Activated naive CD4-positive, alpha-beta T cell treated with anti-CD3 and anti-CD28 coated beads for 36 hours (primary cell): ENCODE measurements at regions of chr10 and their contacts with region 1.

Region 1: GRCh38 chr10:11236234-11236633 is 218.6 kb downstream of the CELF2 start:
- DNase-seq: peak; percentile 61
- H3K4me3 Mint-ChIP-seq: peak overlapping the region; percentile 26
- H3K27ac Mint-ChIP-seq: peak overlapping the region; percentile 93
- H3K4me1 Mint-ChIP-seq: peaks cover 92% of the 10 kb centered on the region
- H3K27me3 Mint-ChIP-seq: no peaks in the 10 kb centered on the region

Region 2: GRCh38 chr10:11097686-11098085 is 138.5 kb before region 1 on chr10:
- CTCF ChIA-PET with region 1: no interaction called
- intact Hi-C with region 1: no loop called
- DNase-seq: peak; percentile 22
- H3K4me3 Mint-ChIP-seq: no peak overlapping the region
- H3K27ac Mint-ChIP-seq: no peak overlapping the region
- H3K4me1 Mint-ChIP-seq: no peaks in the 10 kb centered on the region
- H3K27me3 Mint-ChIP-seq: peaks cover 2% of the 10 kb centered on the region

Region 3: GRCh38 chr10:11120711-11121110 is 115.5 kb before region 1 on chr10:
- CTCF ChIA-PET with region 1: no interaction called
- intact Hi-C with region 1: no loop called
- DNase-seq: no peak
- H3K4me3 Mint-ChIP-seq: no peak overlapping the region
- H3K27ac Mint-ChIP-seq: no peak overlapping the region
- H3K4me1 Mint-ChIP-seq: peaks cover 20% of the 10 kb centered on the region
- H3K27me3 Mint-ChIP-seq: no peaks in the 10 kb centered on the region

Region 4: DNA sequence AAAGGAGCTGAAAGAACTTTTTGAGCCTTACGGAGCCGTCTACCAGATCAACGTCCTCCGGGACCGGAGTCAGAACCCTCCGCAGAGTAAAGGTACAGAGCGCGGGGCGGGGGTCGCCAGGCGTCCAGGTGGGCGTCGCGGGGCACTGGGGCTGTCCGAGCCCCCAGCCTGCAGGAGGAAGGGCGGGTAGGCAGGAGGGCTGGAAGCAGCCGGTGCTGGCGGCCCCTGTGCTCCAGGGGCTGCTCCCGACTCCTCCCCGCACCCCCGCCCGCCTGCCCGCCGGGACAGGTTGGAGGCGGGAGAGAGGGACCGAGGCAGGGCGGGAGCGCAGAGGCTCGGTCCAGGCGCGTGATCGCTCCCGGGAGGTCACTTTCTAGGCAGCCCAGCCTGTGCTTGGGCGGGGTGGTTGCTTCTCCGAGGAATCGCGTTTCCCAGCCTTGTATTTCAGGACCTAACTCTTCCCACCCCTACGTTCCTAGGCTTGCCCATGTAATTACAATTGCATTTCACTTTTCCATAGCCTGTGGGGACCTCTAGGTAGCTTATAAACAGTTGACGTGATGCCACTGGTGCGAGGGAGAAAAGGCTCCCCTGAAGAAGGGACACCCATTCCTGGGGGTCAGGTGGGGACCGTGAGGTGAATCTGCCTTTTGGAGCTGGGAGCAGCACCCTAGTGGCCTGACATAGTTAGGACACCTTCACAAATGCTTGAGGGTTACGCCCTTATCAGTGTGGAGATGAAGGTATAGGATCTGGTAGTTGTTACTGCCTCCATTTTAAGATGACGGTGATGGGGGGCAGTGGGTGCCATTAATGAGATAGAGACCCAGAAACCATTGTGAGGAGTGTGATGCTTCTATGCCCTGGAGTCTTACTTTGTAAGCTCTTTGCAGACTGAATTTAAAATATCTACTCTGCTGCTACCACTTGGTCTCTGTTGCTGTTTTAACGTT is 70.4 kb before region 1 on chr10:
- CTCF ChIA-PET with region 1: interaction called, 5 read pairs
- intact Hi-C with region 1: loop called (anchors 1 kb)
- DNase-seq: peak; percentile 84
- H3K4me3 Mint-ChIP-seq: no peak overlapping the region
- H3K27ac Mint-ChIP-seq: no peak overlapping the region
- H3K4me1 Mint-ChIP-seq: peaks cover 26% of the 10 kb centered on the region
- H3K27me3 Mint-ChIP-seq: no peaks in the 10 kb centered on the region

Region 5: DNA sequence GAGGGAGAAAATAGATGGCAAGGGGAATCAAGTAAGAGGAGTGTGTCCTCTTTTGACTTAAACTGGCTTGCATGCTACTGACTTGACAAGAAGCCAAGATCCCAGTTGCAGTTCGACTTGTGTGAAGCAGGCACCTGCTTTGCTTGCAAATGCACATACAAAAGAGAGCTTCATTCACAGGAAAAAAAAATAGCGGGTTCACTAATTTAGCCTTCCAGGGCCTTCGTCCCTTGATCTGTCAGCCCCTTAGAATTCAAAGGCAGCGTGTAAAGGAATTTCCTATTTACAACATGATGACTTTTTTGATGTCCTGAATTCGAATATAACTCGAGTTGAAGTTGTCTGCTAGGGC is 26.4 kb before region 1 on chr10:
- CTCF ChIA-PET with region 1: interaction called, 6 read pairs
- intact Hi-C with region 1: loop called (anchors 1 kb)
- DNase-seq: peak; percentile 38
- H3K4me3 Mint-ChIP-seq: peak overlapping the region; percentile 60
- H3K27ac Mint-ChIP-seq: peak overlapping the region; percentile 95
- H3K4me1 Mint-ChIP-seq: peaks cover 99% of the 10 kb centered on the region
- H3K27me3 Mint-ChIP-seq: no peaks in the 10 kb centered on the region

Region 6: DNA sequence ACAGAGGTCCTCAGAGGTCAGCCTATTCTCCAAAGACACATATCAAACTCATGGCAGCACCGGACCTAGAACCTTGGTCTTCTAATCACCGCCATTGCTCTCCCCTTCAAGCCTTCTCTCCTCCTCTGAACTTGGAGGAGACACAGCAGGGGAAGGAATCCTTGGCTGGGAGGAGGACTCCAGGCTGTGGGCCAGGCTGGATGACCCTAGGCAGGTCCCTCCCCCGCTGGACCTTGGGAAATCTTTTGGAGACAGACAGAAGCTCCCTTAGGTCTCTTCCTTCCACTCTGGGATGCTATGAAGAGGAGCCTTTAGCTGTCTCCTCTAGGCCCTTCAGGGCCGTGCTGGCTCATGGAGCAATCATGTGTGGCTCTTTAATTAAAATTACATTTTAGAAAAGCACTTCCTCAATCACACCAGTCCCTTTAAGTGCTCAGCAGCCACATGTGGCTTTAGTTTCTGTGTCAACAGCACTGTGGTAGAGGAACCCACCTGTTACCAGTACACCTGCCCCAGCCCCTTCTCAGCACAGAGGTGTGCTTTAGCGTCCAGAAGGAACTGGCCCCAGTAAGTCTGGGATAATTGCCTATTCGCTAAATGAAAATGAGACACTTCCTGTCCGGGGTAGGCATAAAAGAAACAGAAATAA is 19.7 kb after region 1 on chr10:
- CTCF ChIA-PET with region 1: interaction called, 3 read pairs
- intact Hi-C with region 1: loop called (anchors 2 kb)
- DNase-seq: no peak
- H3K4me3 Mint-ChIP-seq: no peak overlapping the region
- H3K27ac Mint-ChIP-seq: peak overlapping the region; percentile 86
- H3K4me1 Mint-ChIP-seq: peaks cover 67% of the 10 kb centered on the region
- H3K27me3 Mint-ChIP-seq: no peaks in the 10 kb centered on the region

Region 7: DNA sequence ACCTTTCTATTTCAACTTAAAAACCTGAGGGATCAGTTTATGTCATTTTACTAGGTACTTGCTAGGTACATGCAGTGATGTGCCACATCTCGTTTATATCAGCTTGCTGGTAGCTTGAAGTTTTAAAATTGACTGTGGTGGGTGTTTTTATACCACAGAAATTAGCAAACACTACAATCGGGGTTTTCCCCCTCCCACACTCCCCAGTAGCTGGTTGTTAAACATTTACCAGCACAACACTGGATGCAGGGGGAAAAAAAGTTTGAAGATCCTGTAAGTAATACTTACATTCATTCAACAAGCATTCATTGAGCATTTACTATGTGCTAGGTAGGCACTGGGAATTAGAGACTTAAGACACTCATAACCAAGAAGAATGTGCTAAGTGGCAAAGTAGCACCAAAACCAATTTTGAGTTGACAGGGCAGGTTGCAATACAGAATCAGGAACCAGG is 342.6 kb after region 1 on chr10:
- CTCF ChIA-PET with region 1: no interaction called
- intact Hi-C with region 1: loop called (anchors 5 kb)
- DNase-seq: peak; percentile 84
- H3K4me3 Mint-ChIP-seq: no peak overlapping the region
- H3K27ac Mint-ChIP-seq: peak overlapping the region; percentile 25
- H3K4me1 Mint-ChIP-seq: peaks cover 58% of the 10 kb centered on the region
- H3K27me3 Mint-ChIP-seq: no peaks in the 10 kb centered on the region

Region 8: DNA sequence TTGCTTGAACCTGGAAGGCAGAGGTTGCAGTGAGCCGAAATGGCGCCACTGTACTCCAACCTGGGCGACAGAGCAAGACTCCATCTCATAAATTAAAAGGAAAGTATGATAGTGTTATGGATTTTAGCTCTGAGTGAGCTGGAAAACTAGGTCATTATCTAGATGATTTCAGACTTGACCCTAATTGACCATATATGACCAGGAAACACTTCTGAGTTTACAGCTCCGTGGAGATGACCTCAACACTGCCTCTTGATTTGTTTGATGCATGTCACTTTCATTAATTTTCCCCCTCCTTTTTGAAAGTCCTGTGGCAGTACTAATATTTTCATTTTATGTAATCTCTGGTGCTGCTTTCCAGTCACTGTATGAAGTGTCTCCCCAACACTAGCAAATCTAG is 885.4 kb after region 1 on chr10:
- CTCF ChIA-PET with region 1: no interaction called
- intact Hi-C with region 1: loop called (anchors 5 kb)
- DNase-seq: no peak
- H3K4me3 Mint-ChIP-seq: no peak overlapping the region
- H3K27ac Mint-ChIP-seq: peak overlapping the region; percentile 98
- H3K4me1 Mint-ChIP-seq: peaks cover 30% of the 10 kb centered on the region
- H3K27me3 Mint-ChIP-seq: no peaks in the 10 kb centered on the region